ENCODE measurements at regions of chr9 and their contacts with region 1.

Region 1: DNA sequence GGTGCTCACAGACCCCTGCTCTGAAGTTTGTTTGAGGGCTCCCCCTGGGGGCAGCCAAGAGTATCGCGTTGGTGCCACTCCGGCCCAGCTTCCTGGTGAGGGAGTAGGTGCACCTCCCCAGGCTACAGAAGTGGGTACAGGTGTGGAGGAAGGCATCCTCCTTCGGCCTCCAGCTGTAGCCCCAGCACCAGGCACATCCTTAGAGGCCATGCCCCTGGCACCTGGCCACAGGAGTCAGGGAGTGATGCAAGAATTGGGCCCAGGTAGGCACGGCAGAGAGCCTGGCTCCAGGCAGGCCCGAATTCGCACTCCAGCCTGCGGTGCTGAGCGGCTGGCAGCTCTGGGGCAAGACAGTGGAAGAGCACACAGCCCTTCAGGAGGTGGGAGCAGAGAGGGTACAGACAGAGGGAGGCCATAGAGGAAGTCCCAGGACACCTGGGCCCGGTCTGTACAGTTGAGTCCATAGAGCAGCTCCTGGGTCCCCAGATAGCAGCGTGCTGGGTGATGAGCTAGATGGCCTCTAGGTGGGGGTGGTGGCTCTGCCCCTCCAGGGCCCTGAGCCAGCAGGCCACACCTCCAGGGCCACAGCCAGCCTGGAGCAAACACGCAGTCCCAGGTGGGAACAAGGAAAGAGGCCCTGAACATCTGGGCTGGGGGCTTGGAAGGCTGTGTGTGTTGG is 2.4 kb downstream of the SAPCD2 start:
- DNase-seq: no peak
- ATAC-seq: peak; percentile 72
- H3K4me3 ChIP-seq: no peak overlapping the region
- H3K27ac ChIP-seq: no peak overlapping the region
- H3K4me1 ChIP-seq: peaks cover 2% of the 10 kb centered on the region; the same call in 1 of the 2 replicates
- H3K27me3 ChIP-seq: no peaks in the 10 kb centered on the region
- CTCF ChIP-seq: peak; percentile 83

Region 2: GRCh38 chr9:136902259-136902821 is 165.7 kb before region 1 on chr9:
- CTCF ChIA-PET with region 1: no interaction called
- POLR2A ChIA-PET with region 1: no interaction called
- in situ Hi-C with region 1: no loop called
- intact Hi-C with region 1: no loop called
- DNase-seq: no peak
- ATAC-seq: peak; percentile 84
- H3K4me3 ChIP-seq: 0 out of 4 replicates have a peak overlapping the region, but pooled peaks of 1 of the 2 experiments have one; percentile 19
- H3K27ac ChIP-seq: peak overlapping the region; percentile 97
- H3K4me1 ChIP-seq: peaks cover 49% of the 10 kb centered on the region
- H3K27me3 ChIP-seq: no peaks in the 10 kb centered on the region
- CTCF ChIP-seq: no peak

Region 3: DNA sequence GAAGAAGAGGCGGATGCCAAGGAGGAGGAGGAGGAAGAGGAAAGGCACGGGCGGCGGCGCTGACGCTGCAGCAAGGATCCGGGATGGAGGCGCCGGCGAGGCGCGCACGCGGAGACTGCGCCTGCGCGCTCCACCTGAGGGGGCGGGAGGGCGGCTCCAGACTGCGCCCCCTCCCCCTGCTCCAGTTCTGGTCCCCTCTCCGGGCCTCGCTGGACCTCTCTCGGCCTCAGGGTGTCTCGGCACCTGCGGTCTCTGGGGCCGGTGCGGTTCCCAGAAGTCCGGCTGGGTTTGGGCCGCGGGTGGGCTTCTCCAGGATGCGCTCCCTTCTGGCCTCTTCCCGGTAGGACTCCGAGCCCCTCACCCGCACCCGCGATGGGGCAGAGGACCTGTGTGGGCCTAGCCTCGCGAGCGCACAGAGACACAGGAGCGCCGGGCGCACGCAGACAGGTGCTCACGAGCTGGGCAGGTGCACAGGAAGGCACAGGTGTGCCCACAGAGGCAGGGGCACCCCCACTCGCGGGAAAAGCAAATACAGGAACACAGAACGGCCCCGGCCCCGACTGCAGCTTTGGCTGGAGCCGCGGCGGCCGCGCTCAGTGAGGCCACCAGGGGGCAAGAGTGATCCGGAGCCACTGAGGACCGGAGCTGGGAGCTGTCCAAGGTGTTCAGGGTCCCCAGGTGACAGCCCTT is 21.8 kb before region 1 on chr9 and contains the start of gene NPDC1:
- CTCF ChIA-PET with region 1: interaction called, 13 read pairs
- POLR2A ChIA-PET with region 1: no interaction called
- in situ Hi-C with region 1: no loop called
- intact Hi-C with region 1: loop called (anchors 1 kb)
- DNase-seq: no peak
- ATAC-seq: peak; percentile 74
- H3K4me3 ChIP-seq: peak within 1 kb of the TSS; percentile 54 to 62
- H3K27ac ChIP-seq: 0 out of 2 replicates have a peak within 1 kb of the TSS, but pooled peaks have one; percentile 44
- H3K4me1 ChIP-seq: peaks cover 10% of the 10 kb centered on the region; the same call in 1 of the 2 replicates
- H3K27me3 ChIP-seq: no peaks in the 10 kb centered on the region
- CTCF ChIP-seq: peak; percentile 90
- total RNA-seq, gene NPDC1: 43.5 TPM